Activated T-helper 2 cell treated with anti-CD3 and anti-CD28 coated beads, Interferon-gamma antibody, Interleukin-2, Interleukin-4, amounts not matched to agents 10 μg/mL and 5 μg/mL and 100 μg/mL, durations not matched to agents 14 hours and 24 hours and 36 hours (primary cell): ENCODE measurements at regions of chr5 and their contacts with region 1.

Region 1: DNA sequence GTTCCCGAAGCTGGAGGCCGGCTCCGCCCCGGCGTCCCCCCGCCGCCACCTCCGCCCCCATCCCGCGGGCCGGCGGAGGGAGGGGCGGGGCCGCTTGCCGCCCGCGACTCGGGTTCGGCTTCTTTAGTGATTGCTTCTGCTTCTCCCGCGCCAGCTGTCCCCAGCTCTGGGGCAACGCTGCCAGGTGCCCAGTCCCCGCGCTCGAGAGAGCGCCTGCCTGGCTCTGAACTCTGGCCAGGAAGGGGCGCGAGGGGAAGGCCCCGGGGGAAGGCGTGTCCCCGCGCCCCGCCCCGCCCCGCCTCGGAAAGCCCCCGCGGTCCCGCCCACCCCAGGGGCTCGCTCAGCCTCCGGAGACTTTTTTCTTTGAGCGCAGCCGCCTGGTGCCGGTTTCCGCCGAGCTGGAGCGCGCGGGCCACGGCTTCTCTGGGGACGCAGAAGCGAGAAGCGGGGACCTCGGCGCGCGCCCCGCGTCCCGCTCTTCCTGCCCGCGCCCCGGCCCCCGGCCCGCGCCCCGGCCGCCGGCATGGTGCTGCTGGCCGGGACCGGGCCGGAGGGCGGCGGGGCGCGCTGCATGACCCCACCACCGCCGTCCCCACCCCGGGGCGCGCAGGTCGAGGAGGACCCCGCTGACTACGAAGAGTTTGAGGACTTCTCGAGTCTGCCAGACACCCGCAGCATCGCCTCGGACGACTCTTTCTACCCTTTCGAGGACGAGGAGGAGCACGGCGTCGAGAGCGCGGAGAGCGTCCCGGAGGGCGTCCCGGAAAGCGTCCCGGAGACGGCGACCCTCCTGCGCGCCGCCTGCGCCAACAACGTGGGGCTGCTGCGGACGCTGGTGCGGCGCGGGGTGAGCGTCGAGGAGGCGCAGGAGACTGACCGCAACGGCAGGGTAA is at the start of gene ANKRD33B:
- DNase-seq: peak; percentile 76
- H3K4me3 Mint-ChIP-seq: peak within 1 kb of the TSS; percentile 92
- H3K27ac Mint-ChIP-seq: peak within 1 kb of the TSS; percentile 82
- H3K4me1 Mint-ChIP-seq: peaks cover 43% of the 10 kb centered on the region
- H3K27me3 Mint-ChIP-seq: peaks cover 16% of the 10 kb centered on the region
- total RNA-seq, gene ANKRD33B: 31.1 and 31.5 TPM in 2 replicates

Region 2: DNA sequence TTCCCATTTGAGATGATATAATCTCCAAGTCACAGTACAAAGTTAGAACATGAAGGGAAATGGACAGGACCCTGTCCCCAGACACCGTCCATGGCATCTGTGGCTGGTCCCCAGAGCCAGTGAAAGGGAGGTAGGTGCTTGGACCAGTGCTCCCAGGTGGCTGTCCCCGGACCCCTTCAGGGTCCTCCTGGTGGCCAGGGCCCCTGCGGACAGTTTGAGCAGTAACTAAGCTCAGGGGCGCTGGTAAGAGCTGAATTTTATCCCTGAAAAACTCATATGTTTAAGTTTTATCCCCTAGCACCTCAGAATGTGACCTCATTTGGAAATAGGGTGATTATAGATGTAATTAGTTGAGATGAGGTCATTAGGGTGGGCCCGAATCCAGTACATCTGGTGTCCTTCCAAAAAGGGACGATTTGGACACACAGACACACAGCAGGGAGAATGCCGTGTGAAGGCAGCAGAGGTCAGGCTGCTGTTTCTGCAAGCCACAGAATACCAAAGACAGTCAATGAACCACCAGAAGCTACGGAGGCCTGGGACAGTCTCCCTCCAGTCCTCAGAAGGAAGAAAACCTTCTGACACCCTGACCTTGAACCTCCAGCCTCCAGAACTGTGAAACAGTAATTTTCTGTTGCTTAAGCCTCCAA is 499.5 kb before region 1 on chr5:
- intact Hi-C with region 1: no loop called
- DNase-seq: no peak
- H3K4me3 Mint-ChIP-seq: no peak overlapping the region
- H3K27ac Mint-ChIP-seq: no peak overlapping the region
- H3K4me1 Mint-ChIP-seq: no peaks in the 10 kb centered on the region
- H3K27me3 Mint-ChIP-seq: no peaks in the 10 kb centered on the region

Region 3: GRCh38 chr5:10441083-10441991 is 122.9 kb before region 1 on chr5 and contains the start of gene ROPN1L:
- intact Hi-C with region 1: loop called (anchors 1 kb)
- DNase-seq: peak; percentile 79
- H3K4me3 Mint-ChIP-seq: peak within 1 kb of the TSS; percentile 82
- H3K27ac Mint-ChIP-seq: no peak within 1 kb of the TSS
- H3K4me1 Mint-ChIP-seq: peaks cover 34% of the 10 kb centered on the region
- H3K27me3 Mint-ChIP-seq: peaks cover 10% of the 10 kb centered on the region
- total RNA-seq, gene ROPN1L: 0.16 and 0.55 TPM in 2 replicates

Region 4: DNA sequence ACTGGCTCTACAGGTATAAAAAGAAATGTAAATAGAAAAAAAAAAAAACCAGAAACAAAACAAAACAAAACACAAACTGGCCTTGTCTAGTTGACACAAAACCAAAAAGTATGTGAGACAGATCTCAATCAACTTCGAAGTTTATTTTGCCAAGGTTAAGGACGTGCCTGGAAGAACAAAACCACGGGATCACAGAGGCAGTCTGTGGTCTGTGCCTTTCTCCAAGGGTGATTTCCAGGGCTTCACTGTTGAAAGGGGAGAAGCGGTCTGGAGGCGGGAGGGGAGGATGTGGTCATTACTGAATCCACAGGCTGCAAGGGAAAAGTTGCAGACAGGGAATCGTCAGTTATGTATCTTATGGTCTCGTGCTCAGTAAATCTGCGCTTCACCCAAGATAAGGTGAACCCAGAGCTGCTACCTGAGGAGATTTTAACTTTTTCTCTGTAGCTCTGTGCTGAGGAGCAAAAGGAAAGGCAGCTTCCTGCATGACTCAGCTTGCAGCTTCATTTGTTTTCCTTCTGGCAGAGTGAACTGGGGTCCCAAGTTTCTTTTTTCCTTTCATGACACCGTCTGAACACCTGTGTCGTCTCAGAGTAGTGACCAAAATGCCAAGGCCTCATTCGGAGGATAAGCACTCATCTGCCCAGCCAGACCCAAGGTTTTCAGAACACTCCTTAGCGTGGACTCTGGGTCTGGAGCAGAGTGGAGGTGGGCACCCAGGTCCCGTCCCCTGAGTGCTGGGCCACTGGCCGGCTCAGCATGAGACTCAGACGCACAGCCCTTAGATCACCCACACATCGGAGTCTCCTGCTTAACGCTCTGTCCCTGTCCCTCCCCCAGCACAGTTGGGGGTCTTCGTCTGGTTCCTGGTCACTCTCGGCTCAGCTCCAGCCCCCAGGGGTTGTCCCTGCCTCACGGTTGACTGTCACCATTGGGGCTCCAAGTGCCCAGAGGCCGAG is 96.7 kb before region 1 on chr5:
- intact Hi-C with region 1: no loop called
- DNase-seq: no peak
- H3K4me3 Mint-ChIP-seq: no peak overlapping the region
- H3K27ac Mint-ChIP-seq: no peak overlapping the region
- H3K4me1 Mint-ChIP-seq: peaks cover 11% of the 10 kb centered on the region
- H3K27me3 Mint-ChIP-seq: peaks cover 2% of the 10 kb centered on the region

Region 5: GRCh38 chr5:10577371-10578292 is 13.4 kb after region 1 on chr5:
- intact Hi-C with region 1: loop called (anchors 2 kb)
- DNase-seq: no peak
- H3K4me3 Mint-ChIP-seq: no peak overlapping the region
- H3K27ac Mint-ChIP-seq: peak overlapping the region; percentile 30
- H3K4me1 Mint-ChIP-seq: peaks cover 66% of the 10 kb centered on the region
- H3K27me3 Mint-ChIP-seq: no peaks in the 10 kb centered on the region

Region 6: GRCh38 chr5:10595678-10596309 is 31.6 kb after region 1 on chr5:
- intact Hi-C with region 1: loop called (anchors 2 kb)
- DNase-seq: peak; percentile 28
- H3K4me3 Mint-ChIP-seq: peak overlapping the region; percentile 7
- H3K27ac Mint-ChIP-seq: peak overlapping the region; percentile 79
- H3K4me1 Mint-ChIP-seq: peaks cover 69% of the 10 kb centered on the region
- H3K27me3 Mint-ChIP-seq: no peaks in the 10 kb centered on the region

Region 7: DNA sequence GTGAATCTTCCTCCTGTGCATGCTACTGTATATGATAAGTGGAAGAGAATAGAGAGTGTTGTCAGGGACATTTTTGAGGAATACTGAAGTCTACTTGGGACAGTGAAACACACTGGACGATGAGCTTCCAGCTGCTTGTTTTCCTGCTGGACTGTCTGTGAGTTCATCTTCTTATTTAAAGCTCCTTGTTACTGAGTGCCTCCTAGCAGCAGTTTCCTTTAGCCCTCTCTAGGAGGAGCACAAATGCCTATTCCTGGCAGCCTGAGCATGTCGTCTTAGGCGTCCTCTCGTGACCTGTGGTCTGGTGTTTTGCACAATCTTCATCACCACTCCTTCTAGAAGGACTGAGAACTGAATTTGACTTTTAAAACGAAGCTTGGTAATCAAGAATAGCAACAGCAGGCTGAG is 43.5 kb after region 1 on chr5:
- intact Hi-C with region 1: loop called (anchors 1 kb)
- DNase-seq: no peak
- H3K4me3 Mint-ChIP-seq: peak overlapping the region; percentile 77
- H3K27ac Mint-ChIP-seq: peak overlapping the region; percentile 96
- H3K4me1 Mint-ChIP-seq: peaks cover 45% of the 10 kb centered on the region
- H3K27me3 Mint-ChIP-seq: no peaks in the 10 kb centered on the region

Region 8: DNA sequence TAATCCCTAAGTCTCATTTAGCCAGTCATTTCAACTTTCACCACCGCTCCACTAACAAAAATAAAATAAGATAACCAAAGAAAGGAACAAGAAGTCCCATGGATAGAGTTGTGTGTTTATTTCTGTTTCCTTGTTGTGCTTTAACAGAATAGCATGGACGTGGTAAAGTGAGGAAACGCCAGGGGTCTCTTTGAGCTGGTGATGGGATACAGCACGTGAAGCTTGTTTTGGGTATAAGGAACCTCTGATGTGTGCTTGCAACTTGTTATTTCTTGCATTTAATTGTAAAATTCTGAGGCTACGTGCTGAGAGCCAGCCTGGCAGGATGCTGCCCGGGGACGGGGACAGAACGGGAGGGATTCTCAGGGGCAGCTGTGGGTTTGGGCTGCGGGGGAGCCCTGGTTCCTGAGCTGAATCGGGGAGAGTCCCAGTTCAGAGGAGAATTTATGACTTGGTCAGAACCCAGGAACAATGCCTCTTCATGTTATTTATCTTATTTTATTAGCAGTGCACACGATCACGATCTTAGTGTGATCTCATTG is 63.0 kb after region 1 on chr5:
- intact Hi-C with region 1: loop called (anchors 1 kb)
- DNase-seq: no peak
- H3K4me3 Mint-ChIP-seq: peak overlapping the region; percentile 76
- H3K27ac Mint-ChIP-seq: peak overlapping the region; percentile 91
- H3K4me1 Mint-ChIP-seq: peaks cover 51% of the 10 kb centered on the region
- H3K27me3 Mint-ChIP-seq: no peaks in the 10 kb centered on the region

Region 9: DNA sequence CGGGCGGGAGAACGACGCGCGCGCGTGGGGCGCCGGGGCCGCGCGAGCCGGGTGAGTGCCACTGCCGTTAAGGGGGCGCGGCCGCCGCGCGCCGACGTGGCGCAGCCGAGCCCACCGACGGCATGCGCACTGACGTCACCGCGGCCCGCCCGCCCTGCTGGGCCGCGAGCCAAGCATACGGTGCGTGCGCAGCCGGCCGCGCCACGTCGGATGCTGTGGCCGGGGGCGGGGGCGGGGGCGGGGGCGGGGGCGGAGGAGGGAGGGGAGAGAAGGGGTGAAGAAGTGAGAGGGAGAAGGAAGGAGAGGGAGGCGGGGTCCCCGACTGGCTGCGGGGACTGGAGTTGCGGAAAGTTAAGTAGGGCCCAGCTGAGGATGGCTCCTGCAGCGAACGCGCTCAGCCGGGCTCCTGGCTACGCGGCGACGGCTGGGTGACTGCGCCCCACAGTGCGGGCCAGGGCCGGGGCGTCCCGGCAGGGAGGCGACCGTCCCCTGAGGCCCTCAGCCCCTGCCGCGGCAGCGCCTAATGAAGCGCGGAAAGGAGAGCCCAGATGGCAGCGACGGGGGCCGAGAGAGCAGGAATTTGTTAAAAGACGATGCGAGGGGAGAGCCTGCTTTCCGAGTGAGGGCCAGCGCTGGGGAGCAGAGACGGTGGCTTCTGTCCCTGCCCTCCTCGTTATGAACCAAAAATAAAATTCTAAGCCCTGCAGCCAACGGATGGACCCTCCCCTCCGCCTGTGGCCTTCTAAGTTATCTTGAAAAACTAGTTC is 197.2 kb after region 1 on chr5 and contains the start of gene DAP:
- intact Hi-C with region 1: loop called (anchors 2 kb)
- DNase-seq: peak; percentile 87
- H3K4me3 Mint-ChIP-seq: peak within 1 kb of the TSS; percentile 97
- H3K27ac Mint-ChIP-seq: peak within 1 kb of the TSS; percentile 84
- H3K4me1 Mint-ChIP-seq: peaks cover 24% of the 10 kb centered on the region
- H3K27me3 Mint-ChIP-seq: peaks cover 15% of the 10 kb centered on the region
- total RNA-seq, gene DAP: 51.3 and 56.6 TPM in 2 replicates